ENCODE measurements at regions of chr6 and their contacts with region 1.

Region 1: DNA sequence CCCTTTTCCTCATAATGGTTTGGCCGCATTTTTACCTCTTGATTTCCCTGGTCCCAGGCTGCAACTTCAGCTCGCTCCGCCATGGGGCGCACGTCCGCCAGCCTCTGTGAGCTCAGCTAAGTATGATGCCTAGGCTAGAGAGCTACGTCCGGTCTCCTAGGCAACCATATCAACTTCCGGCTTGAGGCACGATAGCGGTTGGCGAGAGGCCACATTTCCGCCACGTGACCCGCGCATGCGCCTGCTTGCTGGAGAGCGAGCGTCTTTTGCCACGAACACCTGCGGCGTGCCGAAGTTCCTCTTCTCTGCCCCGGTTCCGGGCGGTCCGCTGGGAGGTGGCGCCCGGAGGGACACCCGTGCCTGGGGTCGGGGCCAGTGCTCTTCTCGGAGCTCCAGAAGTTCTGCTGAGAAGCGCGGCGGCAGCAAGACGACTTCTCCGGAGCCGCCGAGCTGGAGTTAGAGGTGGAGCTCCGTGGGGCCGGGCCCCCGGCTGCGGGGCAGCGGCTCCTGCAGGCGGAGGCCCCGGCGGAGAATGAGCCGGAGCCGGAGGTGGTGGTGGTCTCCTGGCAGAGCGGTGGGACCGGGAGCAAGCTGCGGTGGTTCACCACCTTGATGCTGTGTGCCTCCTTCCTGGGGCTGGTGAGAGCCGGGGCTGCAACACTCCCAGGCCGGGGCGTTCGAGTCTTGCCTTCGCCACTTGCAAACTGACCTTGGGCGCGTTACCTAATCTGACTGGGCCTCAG is 172.0 kb downstream of the SLC16A10 start:
- DNase-seq: peak; percentile 99
- H3K4me3 Mint-ChIP-seq: peak overlapping the region; percentile 73
- H3K27ac Mint-ChIP-seq: peak overlapping the region; percentile 79
- H3K4me1 Mint-ChIP-seq: peaks cover 23% of the 10 kb centered on the region
- H3K27me3 Mint-ChIP-seq: peaks cover 9% of the 10 kb centered on the region
- CTCF ChIP-seq: peak; percentile 93

Region 2: GRCh38 chr6:111011360-111012142 is 247.7 kb before region 1 on chr6:
- CTCF ChIA-PET with region 1: interaction called, 18 read pairs
- POLR2A ChIA-PET with region 1: interaction called, 3 read pairs
- intact Hi-C with region 1: loop called (anchors 1 kb)
- DNase-seq: peak; percentile 55
- H3K4me3 Mint-ChIP-seq: no peak overlapping the region
- H3K27ac Mint-ChIP-seq: no peak overlapping the region
- H3K4me1 Mint-ChIP-seq: no peaks in the 10 kb centered on the region
- H3K27me3 Mint-ChIP-seq: no peaks in the 10 kb centered on the region
- CTCF ChIP-seq: peak; percentile 45

Region 3: DNA sequence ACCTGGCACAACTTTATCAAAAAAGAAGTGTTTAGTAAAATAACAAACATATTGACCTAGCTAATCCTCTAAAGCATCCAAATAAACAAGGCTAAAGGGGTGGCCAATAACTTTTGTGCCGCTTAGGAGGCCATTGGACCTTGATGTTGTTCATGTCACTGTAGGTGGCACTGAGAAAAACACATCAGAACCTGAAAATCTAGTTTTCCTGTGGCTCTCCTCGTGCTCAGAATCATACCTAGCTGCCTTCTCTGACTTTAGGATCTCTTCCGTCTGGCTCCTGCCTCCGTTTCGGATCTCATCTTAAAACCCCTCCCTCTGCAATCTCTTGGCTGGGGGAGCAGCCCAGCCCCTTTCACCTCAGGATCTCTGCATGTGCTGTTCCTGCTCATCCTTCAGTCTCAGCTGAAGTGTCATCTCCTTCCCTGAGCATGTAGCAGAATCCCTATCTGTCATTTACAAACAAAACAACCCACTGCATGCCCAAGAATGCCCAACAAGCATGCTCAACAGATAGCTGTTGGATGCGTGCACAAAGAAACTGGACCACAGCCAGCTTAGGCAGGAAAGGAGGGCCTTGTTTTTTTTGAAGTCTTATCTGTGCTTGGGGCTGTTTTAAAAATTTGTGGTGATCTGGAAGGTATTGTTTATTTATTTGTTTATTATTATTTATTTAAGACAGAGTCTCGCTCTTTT is 190.6 kb before region 1 on chr6:
- CTCF ChIA-PET with region 1: no interaction called
- POLR2A ChIA-PET with region 1: no interaction called
- intact Hi-C with region 1: no loop called
- DNase-seq: no peak
- H3K4me3 Mint-ChIP-seq: no peak overlapping the region
- H3K27ac Mint-ChIP-seq: no peak overlapping the region
- H3K4me1 Mint-ChIP-seq: no peaks in the 10 kb centered on the region
- H3K27me3 Mint-ChIP-seq: peaks cover 63% of the 10 kb centered on the region
- CTCF ChIP-seq: no peak

Region 4: DNA sequence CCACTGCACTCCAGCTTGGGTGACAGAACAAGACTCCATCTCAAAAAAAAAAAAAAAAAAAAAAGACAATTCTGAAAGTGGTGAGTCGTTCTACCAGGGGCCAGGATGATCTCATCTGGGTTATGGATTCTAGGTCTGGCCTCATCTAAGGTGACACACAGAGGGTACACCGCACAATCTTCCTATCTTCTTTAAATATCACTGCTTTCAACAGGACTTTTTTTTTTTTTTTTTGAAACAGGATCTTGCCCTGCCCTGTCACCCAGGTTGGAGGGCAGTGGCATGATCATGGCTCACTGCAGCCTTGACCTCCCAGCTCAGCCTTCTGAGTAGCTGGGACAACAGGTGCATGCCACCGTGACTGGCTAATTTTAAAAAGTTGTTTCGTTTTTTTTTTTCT is 104.3 kb before region 1 on chr6:
- CTCF ChIA-PET with region 1: no interaction called
- POLR2A ChIA-PET with region 1: no interaction called
- intact Hi-C with region 1: no loop called
- DNase-seq: no peak
- H3K4me3 Mint-ChIP-seq: no peak overlapping the region
- H3K27ac Mint-ChIP-seq: no peak overlapping the region
- H3K4me1 Mint-ChIP-seq: peaks cover 7% of the 10 kb centered on the region
- H3K27me3 Mint-ChIP-seq: no peaks in the 10 kb centered on the region
- CTCF ChIP-seq: no peak

Region 5: GRCh38 chr6:111210194-111210728 is 49.0 kb before region 1 on chr6:
- CTCF ChIA-PET with region 1: interaction called, 8 read pairs
- POLR2A ChIA-PET with region 1: no interaction called
- intact Hi-C with region 1: loop called (anchors 2 kb)
- DNase-seq: peak; percentile 69
- H3K4me3 Mint-ChIP-seq: no peak overlapping the region
- H3K27ac Mint-ChIP-seq: no peak overlapping the region
- H3K4me1 Mint-ChIP-seq: no peaks in the 10 kb centered on the region
- H3K27me3 Mint-ChIP-seq: no peaks in the 10 kb centered on the region
- CTCF ChIP-seq: peak; percentile 60

Region 6: GRCh38 chr6:111242452-111242851 is 16.8 kb before region 1 on chr6:
- CTCF ChIA-PET with region 1: interaction called, 12 read pairs
- POLR2A ChIA-PET with region 1: interaction called, 5 read pairs
- intact Hi-C with region 1: no loop called
- DNase-seq: no peak
- H3K4me3 Mint-ChIP-seq: no peak overlapping the region
- H3K27ac Mint-ChIP-seq: no peak overlapping the region
- H3K4me1 Mint-ChIP-seq: no peaks in the 10 kb centered on the region
- H3K27me3 Mint-ChIP-seq: peaks cover 24% of the 10 kb centered on the region
- CTCF ChIP-seq: no peak

Region 7: DNA sequence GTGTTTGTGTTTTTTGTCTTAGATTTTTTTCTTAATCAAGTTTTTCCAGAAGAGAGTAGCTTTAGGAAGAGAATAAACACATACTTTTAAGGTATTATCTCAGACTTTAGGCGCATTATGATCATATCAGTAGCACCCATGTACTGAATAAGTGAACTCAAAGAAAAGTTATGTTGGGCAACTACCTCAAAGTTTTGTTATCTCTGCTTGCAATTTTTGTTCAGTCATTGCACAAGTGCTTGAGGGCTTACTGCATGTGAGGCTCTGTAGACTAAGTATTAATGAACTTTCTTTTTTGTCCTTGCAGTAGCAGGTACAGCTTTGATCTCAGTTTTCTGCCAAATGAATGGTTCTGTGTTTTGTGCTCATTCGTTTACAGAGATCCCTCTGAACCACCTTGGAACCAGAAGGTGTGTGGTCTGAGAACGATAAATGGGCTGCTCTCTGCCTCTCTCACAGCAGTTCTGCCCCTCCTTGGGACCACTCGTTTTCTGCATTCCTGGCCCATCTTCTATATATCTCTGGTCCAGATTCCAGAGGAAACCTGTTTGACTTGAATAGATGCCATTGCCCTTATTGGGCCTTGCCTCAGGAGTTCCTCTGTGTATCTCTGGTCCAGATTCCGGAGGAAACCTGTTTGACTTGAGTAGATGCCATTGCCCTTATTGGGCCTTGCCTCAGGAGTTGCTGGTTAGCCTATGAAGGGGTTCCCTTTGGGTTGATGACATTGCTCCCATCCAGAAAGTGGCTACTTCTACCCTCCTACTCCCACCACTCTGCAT is 17.3 kb after region 1 on chr6:
- CTCF ChIA-PET with region 1: interaction called, 11 read pairs
- POLR2A ChIA-PET with region 1: interaction called, 7 read pairs
- intact Hi-C with region 1: no loop called
- DNase-seq: no peak
- H3K4me3 Mint-ChIP-seq: no peak overlapping the region
- H3K27ac Mint-ChIP-seq: no peak overlapping the region
- H3K4me1 Mint-ChIP-seq: no peaks in the 10 kb centered on the region
- H3K27me3 Mint-ChIP-seq: no peaks in the 10 kb centered on the region
- CTCF ChIP-seq: no peak

Region 8: DNA sequence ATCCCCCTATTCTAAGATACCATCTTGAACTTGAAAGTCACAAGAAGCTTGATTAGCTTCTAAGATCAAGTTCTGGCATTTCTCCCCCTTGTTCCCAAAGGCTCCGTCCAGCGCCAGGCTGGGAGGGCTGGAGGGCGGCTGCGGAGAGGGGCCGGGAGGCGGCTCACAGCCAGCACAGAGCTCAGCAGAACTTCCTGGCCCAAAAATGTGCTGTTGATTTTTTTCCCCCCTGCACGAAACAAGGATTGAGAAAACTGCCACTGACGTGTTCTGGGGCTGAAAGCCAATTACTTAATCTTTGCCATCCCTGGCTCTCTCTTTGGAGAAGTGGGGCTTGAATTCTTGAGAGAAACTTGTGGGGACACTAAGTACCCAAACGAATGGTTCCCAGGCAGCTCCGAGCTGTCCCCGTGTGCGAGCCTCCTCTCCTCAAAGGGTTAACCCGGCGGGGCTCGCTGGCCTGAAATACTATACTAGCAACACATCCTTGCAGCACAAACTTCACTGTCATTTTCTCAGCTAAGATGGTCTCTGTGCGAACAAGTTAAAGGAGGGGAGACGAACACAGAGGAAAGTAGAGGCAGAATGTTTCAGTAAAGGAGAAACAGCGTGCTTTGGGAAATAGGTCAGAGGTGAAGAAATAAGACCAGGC is 346.0 kb after region 1 on chr6:
- CTCF ChIA-PET with region 1: interaction called, 5 read pairs
- POLR2A ChIA-PET with region 1: interaction called, 13 read pairs
- intact Hi-C with region 1: no loop called
- DNase-seq: peak; percentile 88
- H3K4me3 Mint-ChIP-seq: peak overlapping the region; percentile 90
- H3K27ac Mint-ChIP-seq: peak overlapping the region; percentile 72
- H3K4me1 Mint-ChIP-seq: peaks cover 40% of the 10 kb centered on the region
- H3K27me3 Mint-ChIP-seq: no peaks in the 10 kb centered on the region
- CTCF ChIP-seq: no peak

Measured in MCF 10A (cell line).